ENCODE measurements at regions of chr13 and their contacts with region 1.

Region 1: GRCh38 chr13:89066868-89067466 is 1395.8 kb downstream of the SLITRK5 start:
- DNase-seq: peak; percentile 18
- H3K4me3 Mint-ChIP-seq: no peak overlapping the region
- H3K27ac Mint-ChIP-seq: no peak overlapping the region
- H3K4me1 Mint-ChIP-seq: no peaks in the 10 kb centered on the region
- H3K27me3 Mint-ChIP-seq: no peaks in the 10 kb centered on the region

Region 2: GRCh38 chr13:87671031-87671752 is 1395.8 kb before region 1 on chr13 and contains the start of gene SLITRK5:
- CTCF ChIA-PET with region 1: no interaction called
- intact Hi-C with region 1: loop called (anchors 5 kb)
- DNase-seq: peak; percentile 66
- H3K4me3 Mint-ChIP-seq: peak within 1 kb of the TSS; percentile 45
- H3K27ac Mint-ChIP-seq: no peak within 1 kb of the TSS
- H3K4me1 Mint-ChIP-seq: peaks cover 24% of the 10 kb centered on the region
- H3K27me3 Mint-ChIP-seq: peaks cover 45% of the 10 kb centered on the region
- total RNA-seq, gene SLITRK5: not detected

Region 3: GRCh38 chr13:87999791-88000190 is 1067.2 kb before region 1 on chr13:
- CTCF ChIA-PET with region 1: no interaction called
- intact Hi-C with region 1: loop called (anchors 10 kb)
- DNase-seq: no peak
- H3K4me3 Mint-ChIP-seq: no peak overlapping the region
- H3K27ac Mint-ChIP-seq: no peak overlapping the region
- H3K4me1 Mint-ChIP-seq: no peaks in the 10 kb centered on the region
- H3K27me3 Mint-ChIP-seq: no peaks in the 10 kb centered on the region

Measured in activated naive CD4-positive, alpha-beta T cell treated with anti-CD3 and anti-CD28 coated beads for 36 hours (primary cell).